ENCODE measurements at regions of chr6 and their contacts with region 1.

Region 1: DNA sequence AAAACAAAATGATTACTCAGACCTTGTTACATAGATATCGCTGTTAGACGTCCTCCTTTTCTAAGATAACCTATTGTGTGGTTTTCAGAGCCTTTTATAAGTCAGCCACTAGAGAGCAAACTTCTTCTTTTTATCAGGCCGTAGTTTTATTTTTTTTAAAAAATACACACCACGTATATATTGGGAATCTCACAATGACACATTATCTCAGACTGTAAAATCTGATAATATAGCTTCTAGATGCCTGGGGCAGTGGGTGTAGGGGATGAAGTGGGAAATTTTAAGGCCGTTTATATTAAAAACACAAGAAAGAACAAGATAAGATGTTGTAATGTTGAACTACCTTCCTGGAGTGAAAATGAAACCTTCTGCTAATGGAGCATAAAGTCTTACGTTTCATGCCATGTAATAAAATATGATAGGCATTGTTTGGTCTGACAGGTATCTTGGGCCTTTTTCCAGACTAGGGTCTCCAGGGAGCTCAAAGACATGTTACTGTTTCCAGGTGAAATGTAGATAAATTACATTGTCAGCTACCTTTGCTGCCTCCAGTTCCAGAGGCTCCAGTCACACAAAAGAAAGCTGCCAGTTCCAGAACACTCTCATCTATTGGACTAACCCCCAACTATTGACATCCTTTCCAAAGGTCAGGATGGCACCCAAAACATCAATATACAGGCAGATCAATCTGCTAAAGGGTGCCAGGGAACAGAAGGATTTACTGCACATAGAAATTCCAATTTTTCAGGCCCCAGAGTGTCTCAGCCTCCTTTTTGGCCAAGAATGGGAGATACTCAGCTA is 130.2 kb upstream of the AKIRIN2 start:
- DNase-seq: peak; percentile 51
- ATAC-seq: peak; percentile 88
- H3K4me3 ChIP-seq: peak overlapping the region; percentile 15; the same call in 1 of the 2 replicates
- H3K27ac ChIP-seq: peak overlapping the region; percentile 77
- H3K4me1 ChIP-seq: peaks cover 10% of the 10 kb centered on the region
- H3K27me3 ChIP-seq: no peaks in the 10 kb centered on the region
- CTCF ChIP-seq: peak; percentile 43 to 69 (median 54); a peak in 5 of 6 replicates
- EP300 ChIP-seq: peak in 1 of 2 experiments; percentile 32; a peak in 1 of 4 replicates
- POLR2A ChIP-seq: no peak
- RAD21 ChIP-seq: peak; percentile 80

Region 2: DNA sequence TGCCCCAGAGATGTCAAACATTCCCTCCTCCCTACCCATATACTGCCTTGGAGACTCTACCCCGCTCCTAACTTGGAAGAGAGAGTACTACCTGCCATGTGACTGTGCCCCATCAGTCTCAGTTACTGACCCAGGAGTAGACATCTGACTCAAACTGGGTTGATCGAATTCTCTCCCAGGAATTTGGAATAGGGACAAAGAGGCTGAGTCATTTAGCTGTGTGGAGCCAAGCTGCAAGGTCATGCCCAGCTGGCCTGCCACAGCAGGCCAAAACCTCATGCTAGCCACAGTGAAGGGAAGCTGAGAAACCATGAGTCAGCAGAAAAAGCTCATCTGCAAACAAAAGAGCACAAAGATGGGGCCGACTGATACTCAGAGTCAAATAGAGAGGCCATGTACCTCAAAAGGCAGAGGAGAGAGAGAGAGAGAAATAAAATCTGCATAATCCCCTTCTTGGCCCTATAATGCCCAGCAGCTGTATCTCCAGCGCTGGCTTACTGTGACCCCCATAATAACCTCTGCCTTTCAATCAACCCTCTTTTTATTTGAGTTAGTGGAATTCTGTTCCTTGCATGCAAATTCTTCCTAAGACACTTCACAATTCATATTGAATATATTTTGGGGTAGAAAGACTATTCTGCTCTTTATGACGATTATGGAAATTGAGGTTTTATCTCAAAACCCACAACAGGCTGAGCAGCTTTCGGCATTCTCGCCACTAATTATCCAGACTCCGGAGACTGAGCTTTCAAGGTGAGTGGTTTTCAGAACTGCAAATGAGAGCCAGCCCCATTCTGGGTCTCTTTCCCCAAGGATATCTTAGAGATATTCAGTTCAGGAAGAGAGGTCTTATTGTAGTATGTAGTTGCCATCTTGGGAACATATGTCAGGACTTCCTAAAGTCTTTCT is 108.8 kb before region 1 on chr6:
- CTCF ChIA-PET with region 1: no interaction called
- POLR2A ChIA-PET with region 1: no interaction called
- RAD21 ChIA-PET with region 1: interaction called, 3 read pairs
- SMC1A ChIA-PET with region 1: interaction called, 11 read pairs
- in situ Hi-C with region 1: no loop called
- intact Hi-C with region 1: no loop called
- DNase-seq: peak; percentile 77
- ATAC-seq: peak; percentile 77
- H3K4me3 ChIP-seq: peak overlapping the region; percentile 23; the same call in 1 of the 2 replicates
- H3K27ac ChIP-seq: peak overlapping the region; percentile 92
- H3K4me1 ChIP-seq: peaks cover 38% of the 10 kb centered on the region
- H3K27me3 ChIP-seq: no peaks in the 10 kb centered on the region
- CTCF ChIP-seq: no peak
- EP300 ChIP-seq: peak; percentile 26 to 49; a peak in 2 of 4 replicates
- POLR2A ChIP-seq: no peak
- RAD21 ChIP-seq: no peak

Region 3: DNA sequence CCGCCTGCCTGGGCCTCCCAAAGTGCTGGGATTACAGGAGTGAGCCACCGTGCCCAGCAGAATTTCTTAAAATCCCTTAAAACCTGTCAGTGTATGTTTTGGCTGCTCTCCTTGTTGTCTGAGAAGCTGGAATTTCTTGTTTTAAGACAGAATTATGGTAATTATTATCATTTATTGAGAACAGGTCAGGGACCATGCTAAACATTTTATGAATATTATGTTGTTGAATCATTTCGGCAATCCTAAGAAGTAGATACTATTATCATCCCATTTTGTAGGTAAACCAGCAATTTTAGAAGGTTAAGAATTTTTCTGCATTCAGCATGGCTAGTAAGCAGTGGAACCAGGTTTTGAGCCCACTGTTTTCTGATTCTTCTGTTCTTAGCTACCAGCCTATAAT is 44.1 kb before region 1 on chr6:
- CTCF ChIA-PET with region 1: no interaction called
- POLR2A ChIA-PET with region 1: no interaction called
- RAD21 ChIA-PET with region 1: no interaction called
- SMC1A ChIA-PET with region 1: no interaction called
- in situ Hi-C with region 1: no loop called
- intact Hi-C with region 1: no loop called
- DNase-seq: no peak
- ATAC-seq: no peak
- H3K4me3 ChIP-seq: no peak overlapping the region
- H3K27ac ChIP-seq: no peak overlapping the region
- H3K4me1 ChIP-seq: peaks cover 16% of the 10 kb centered on the region
- H3K27me3 ChIP-seq: no peaks in the 10 kb centered on the region
- CTCF ChIP-seq: no peak
- EP300 ChIP-seq: no peak
- POLR2A ChIP-seq: no peak
- RAD21 ChIP-seq: no peak

Region 4: DNA sequence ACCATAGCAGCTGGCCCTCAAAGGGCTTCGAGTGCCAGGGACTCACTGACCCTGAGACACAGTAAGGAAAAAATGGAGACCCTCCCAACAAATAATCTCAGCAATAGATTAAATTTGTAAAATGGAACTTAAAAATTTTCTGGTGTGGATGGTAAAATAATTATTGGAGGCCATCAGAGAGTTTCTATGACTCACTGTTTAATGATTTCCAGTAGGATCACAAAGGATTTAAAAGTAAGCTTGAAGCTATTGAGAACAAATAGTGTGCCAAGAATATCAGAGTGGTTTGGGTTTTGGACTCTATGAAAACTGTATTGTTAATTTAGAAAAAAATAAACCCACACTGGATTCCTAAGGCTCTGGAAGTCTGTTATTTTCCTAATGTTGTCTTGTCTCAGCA is 15.0 kb before region 1 on chr6:
- CTCF ChIA-PET with region 1: interaction called, 27 read pairs
- POLR2A ChIA-PET with region 1: interaction called, 4 read pairs
- RAD21 ChIA-PET with region 1: interaction called, 14 read pairs
- SMC1A ChIA-PET with region 1: interaction called, 12 read pairs
- in situ Hi-C with region 1: no loop called
- intact Hi-C with region 1: no loop called
- DNase-seq: no peak
- ATAC-seq: no peak
- H3K4me3 ChIP-seq: no peak overlapping the region
- H3K27ac ChIP-seq: no peak overlapping the region
- H3K4me1 ChIP-seq: no peaks in the 10 kb centered on the region
- H3K27me3 ChIP-seq: no peaks in the 10 kb centered on the region
- CTCF ChIP-seq: no peak
- EP300 ChIP-seq: no peak
- POLR2A ChIP-seq: no peak
- RAD21 ChIP-seq: no peak

Region 5: GRCh38 chr6:87860902-87861301 is 28.7 kb after region 1 on chr6:
- CTCF ChIA-PET with region 1: no interaction called
- POLR2A ChIA-PET with region 1: no interaction called
- RAD21 ChIA-PET with region 1: no interaction called
- SMC1A ChIA-PET with region 1: no interaction called
- in situ Hi-C with region 1: no loop called
- intact Hi-C with region 1: no loop called
- DNase-seq: no peak
- ATAC-seq: no peak
- H3K4me3 ChIP-seq: no peak overlapping the region
- H3K27ac ChIP-seq: no peak overlapping the region
- H3K4me1 ChIP-seq: no peaks in the 10 kb centered on the region
- H3K27me3 ChIP-seq: no peaks in the 10 kb centered on the region
- CTCF ChIP-seq: no peak
- EP300 ChIP-seq: no peak
- POLR2A ChIP-seq: no peak
- RAD21 ChIP-seq: no peak

Region 6: GRCh38 chr6:87922947-87923330 is 90.7 kb after region 1 on chr6:
- CTCF ChIA-PET with region 1: interaction called, 43 read pairs
- POLR2A ChIA-PET with region 1: interaction called, 4 read pairs
- RAD21 ChIA-PET with region 1: interaction called, 41 read pairs
- SMC1A ChIA-PET with region 1: interaction called, 127 read pairs
- in situ Hi-C with region 1: loop called (anchors 5 kb)
- intact Hi-C with region 1: loop called (anchors 1 kb)
- DNase-seq: peak; percentile 86
- ATAC-seq: peak; percentile 75
- H3K4me3 ChIP-seq: no peak overlapping the region
- H3K27ac ChIP-seq: peak overlapping the region; percentile 94
- H3K4me1 ChIP-seq: peaks cover 71% of the 10 kb centered on the region
- H3K27me3 ChIP-seq: no peaks in the 10 kb centered on the region
- CTCF ChIP-seq: no peak
- EP300 ChIP-seq: peak; percentile 84 to 90
- POLR2A ChIP-seq: peak; percentile 34; the same call in 1 of the 2 replicates
- RAD21 ChIP-seq: no peak

Region 7: GRCh38 chr6:88165844-88166492 is 333.7 kb after region 1 on chr6 and contains the start of gene CNR1:
- CTCF ChIA-PET with region 1: interaction called, 16 read pairs
- POLR2A ChIA-PET with region 1: no interaction called
- RAD21 ChIA-PET with region 1: interaction called, 39 read pairs
- SMC1A ChIA-PET with region 1: interaction called, 31 read pairs
- in situ Hi-C with region 1: no loop called
- intact Hi-C with region 1: loop called (anchors 2 kb)
- DNase-seq: no peak
- ATAC-seq: peak; percentile 76
- H3K4me3 ChIP-seq: peak within 1 kb of the TSS; percentile 94
- H3K27ac ChIP-seq: no peak within 1 kb of the TSS; the same call in 1 of the 2 replicates
- H3K4me1 ChIP-seq: no peaks in the 10 kb centered on the region
- H3K27me3 ChIP-seq: 0 out of 4 replicates have a peak, but pooled peaks cover 0 to 6% of the 10 kb centered on the region in 2 experiments
- CTCF ChIP-seq: peak; percentile 24 to 47 (median 33); a peak in 4 of 6 replicates
- EP300 ChIP-seq: no peak
- POLR2A ChIP-seq: peak; percentile 77
- RAD21 ChIP-seq: no peak; the same call in 1 of the 2 replicates
- polyA plus RNA-seq, gene CNR1: 2.2 to 3.1 TPM

Region 8: DNA sequence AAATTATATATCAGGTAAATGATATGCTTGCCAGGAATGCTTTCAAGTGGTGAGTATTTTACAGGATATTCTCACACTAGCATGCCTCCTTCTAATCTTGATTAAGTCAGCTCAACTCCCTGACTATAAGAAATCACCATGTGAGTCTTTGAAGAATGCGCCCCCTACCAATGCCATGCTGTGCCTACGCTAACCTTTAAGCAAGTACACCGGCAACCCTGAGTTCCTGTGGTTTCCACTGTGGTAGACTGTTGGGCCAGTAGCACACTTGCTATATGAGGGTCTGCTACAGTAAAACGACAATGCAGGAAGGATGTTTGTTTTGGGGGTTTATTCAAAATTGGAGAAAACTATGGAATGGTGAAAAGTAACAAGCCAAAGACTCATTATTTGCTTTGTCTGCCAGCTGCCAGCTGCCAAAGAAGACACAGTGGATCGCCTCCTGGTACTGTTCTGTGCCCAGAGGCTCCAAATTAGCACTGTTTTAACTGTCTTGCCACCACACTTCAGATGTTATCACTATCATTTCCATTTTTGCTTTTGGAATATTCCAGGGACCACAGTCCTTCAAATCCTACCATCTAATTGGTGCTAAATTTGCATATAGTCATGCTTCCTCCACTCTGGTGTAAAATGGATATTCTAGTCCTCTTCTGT is 797.7 kb after region 1 on chr6:
- CTCF ChIA-PET with region 1: no interaction called
- POLR2A ChIA-PET with region 1: no interaction called
- RAD21 ChIA-PET with region 1: interaction called, 3 read pairs
- SMC1A ChIA-PET with region 1: no interaction called
- in situ Hi-C with region 1: no loop called
- intact Hi-C with region 1: loop called (anchors 10 kb)
- DNase-seq: no peak
- ATAC-seq: peak; percentile 84
- H3K4me3 ChIP-seq: no peak overlapping the region
- H3K27ac ChIP-seq: no peak overlapping the region; the same call in 1 of the 2 replicates
- H3K4me1 ChIP-seq: peaks cover 7% of the 10 kb centered on the region; the same call in 1 of the 2 replicates
- H3K27me3 ChIP-seq: no peaks in the 10 kb centered on the region
- CTCF ChIP-seq: peak; percentile 14 to 28 (median 23); a peak in 3 of 6 replicates
- EP300 ChIP-seq: no peak
- POLR2A ChIP-seq: no peak
- RAD21 ChIP-seq: peak; percentile 39; the same call in 1 of the 2 replicates

Region 9: GRCh38 chr6:88919032-88919431 is 1086.8 kb after region 1 on chr6:
- CTCF ChIA-PET with region 1: interaction called, 7 read pairs
- POLR2A ChIA-PET with region 1: no interaction called
- RAD21 ChIA-PET with region 1: interaction called, 12 read pairs
- SMC1A ChIA-PET with region 1: interaction called, 8 read pairs
- in situ Hi-C with region 1: no loop called
- intact Hi-C with region 1: no loop called
- DNase-seq: no peak
- ATAC-seq: 0 out of 3 replicates have a peak, but pooled peaks have one; percentile 31
- H3K4me3 ChIP-seq: no peak overlapping the region
- H3K27ac ChIP-seq: no peak overlapping the region
- H3K4me1 ChIP-seq: no peaks in the 10 kb centered on the region
- H3K27me3 ChIP-seq: no peaks in the 10 kb centered on the region
- CTCF ChIP-seq: peak in 2 of 3 experiments; percentile 5 to 25; a peak in 3 of 6 replicates
- EP300 ChIP-seq: no peak
- POLR2A ChIP-seq: no peak
- RAD21 ChIP-seq: 0 out of 2 replicates have a peak, but pooled peaks have one; percentile 9

Measured in GM12878 (cell line).